ENCODE measurements at regions of chr7 and their contacts with region 1.

Region 1: DNA sequence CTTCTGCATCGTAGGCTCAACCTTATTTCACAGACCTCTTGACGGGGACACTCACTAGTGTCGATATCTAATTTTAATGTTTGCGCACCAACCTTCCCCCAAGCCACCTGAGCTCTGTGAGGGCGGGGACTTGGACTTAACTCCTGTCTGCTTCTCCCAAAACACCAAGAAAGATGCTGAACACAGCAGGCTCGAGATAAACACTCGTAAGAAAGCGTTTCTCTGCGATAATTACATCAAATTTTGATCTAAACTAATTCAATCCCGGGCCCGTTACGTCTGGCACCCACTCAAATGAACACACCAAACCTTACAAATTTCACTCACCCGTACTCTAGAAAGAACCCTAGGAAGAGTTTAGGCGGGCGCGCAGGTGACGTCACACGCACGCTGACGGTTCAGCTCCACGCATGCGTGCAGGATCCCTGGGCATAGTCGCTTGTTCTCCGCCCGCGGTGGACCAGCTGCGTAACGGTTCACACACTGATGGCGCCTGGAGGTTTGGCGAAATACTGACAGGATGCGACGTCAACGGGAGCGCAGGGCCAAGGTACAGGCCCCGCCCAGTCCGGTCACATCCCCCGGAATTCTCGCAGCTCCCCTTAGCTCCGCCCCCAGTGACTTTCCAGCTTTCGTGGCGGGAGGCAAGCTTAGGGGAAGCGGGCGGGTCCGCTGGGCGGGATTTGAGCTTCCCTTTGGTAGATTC is at the start of gene POT1:
- DNase-seq: peak; percentile 98
- H3K4me3 Mint-ChIP-seq: peak within 1 kb of the TSS; percentile 98
- H3K27ac Mint-ChIP-seq: peak within 1 kb of the TSS; percentile 97
- H3K4me1 Mint-ChIP-seq: peaks cover 30% of the 10 kb centered on the region
- H3K27me3 Mint-ChIP-seq: peaks cover 4% of the 10 kb centered on the region
- total RNA-seq, gene POT1: 31.0 TPM in 2 replicates

Region 2: GRCh38 chr7:124765401-124766352 is 163.9 kb before region 1 on chr7 and contains the start of gene GPR37:
- intact Hi-C with region 1: loop called (anchors 5 kb)
- DNase-seq: peak; percentile 78
- H3K4me3 Mint-ChIP-seq: peak within 1 kb of the TSS; percentile 82
- H3K27ac Mint-ChIP-seq: peak within 1 kb of the TSS; percentile 51
- H3K4me1 Mint-ChIP-seq: peaks cover 12% of the 10 kb centered on the region
- H3K27me3 Mint-ChIP-seq: peaks cover 63% of the 10 kb centered on the region
- total RNA-seq, gene GPR37: not detected in 2 replicates

Region 3: GRCh38 chr7:124881981-124882380 is 47.6 kb before region 1 on chr7:
- intact Hi-C with region 1: no loop called
- DNase-seq: no peak
- H3K4me3 Mint-ChIP-seq: no peak overlapping the region
- H3K27ac Mint-ChIP-seq: no peak overlapping the region
- H3K4me1 Mint-ChIP-seq: no peaks in the 10 kb centered on the region
- H3K27me3 Mint-ChIP-seq: no peaks in the 10 kb centered on the region

Region 4: DNA sequence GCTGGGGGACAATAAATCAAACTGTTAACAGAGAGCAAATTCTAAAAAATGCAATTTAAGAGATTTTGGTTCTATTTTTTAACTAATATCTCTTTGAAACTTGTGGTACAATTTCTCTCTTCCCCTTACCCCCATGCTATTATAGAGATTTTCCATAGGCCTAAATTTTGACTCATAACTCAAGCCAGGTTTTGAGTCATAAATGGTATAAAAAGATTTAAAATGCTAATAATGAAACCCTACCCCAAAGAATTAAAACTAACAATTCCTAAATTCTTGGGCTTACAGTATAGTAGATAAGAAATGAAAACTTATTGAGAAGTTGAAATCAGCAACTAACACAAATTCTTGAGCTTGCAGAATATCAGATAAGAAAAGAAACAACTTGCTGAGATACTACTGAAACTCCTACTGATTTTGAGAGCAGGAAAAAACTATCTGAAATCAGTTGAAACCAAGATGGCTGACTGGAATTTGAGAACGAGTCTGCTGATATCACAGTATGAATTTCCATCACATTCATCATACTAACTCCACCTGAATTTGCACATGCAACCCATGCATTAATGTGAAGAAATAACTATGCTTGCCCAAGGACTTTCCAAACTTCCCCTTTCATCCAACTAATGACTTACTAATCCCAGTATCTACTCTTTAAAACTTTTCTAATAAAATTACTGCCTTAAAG is 36.3 kb before region 1 on chr7:
- intact Hi-C with region 1: loop called (anchors 2 kb)
- DNase-seq: no peak
- H3K4me3 Mint-ChIP-seq: no peak overlapping the region
- H3K27ac Mint-ChIP-seq: peak overlapping the region; percentile 36
- H3K4me1 Mint-ChIP-seq: peaks cover 6% of the 10 kb centered on the region
- H3K27me3 Mint-ChIP-seq: no peaks in the 10 kb centered on the region

Region 5: GRCh38 chr7:125436220-125436619 is 506.6 kb after region 1 on chr7:
- intact Hi-C with region 1: no loop called
- DNase-seq: no peak
- H3K4me3 Mint-ChIP-seq: no peak overlapping the region
- H3K27ac Mint-ChIP-seq: no peak overlapping the region
- H3K4me1 Mint-ChIP-seq: no peaks in the 10 kb centered on the region
- H3K27me3 Mint-ChIP-seq: no peaks in the 10 kb centered on the region

Measured in activated CD4-positive, alpha-beta T cell treated with anti-CD3 and anti-CD28 coated beads, Interleukin-2, amount 10 ng/mL, durations not matched to agents 24 days and 14 days (primary cell).